Mammary epithelial cell (primary cell): ENCODE measurements at regions of chr6 and their contacts with region 1.

Region 1: DNA sequence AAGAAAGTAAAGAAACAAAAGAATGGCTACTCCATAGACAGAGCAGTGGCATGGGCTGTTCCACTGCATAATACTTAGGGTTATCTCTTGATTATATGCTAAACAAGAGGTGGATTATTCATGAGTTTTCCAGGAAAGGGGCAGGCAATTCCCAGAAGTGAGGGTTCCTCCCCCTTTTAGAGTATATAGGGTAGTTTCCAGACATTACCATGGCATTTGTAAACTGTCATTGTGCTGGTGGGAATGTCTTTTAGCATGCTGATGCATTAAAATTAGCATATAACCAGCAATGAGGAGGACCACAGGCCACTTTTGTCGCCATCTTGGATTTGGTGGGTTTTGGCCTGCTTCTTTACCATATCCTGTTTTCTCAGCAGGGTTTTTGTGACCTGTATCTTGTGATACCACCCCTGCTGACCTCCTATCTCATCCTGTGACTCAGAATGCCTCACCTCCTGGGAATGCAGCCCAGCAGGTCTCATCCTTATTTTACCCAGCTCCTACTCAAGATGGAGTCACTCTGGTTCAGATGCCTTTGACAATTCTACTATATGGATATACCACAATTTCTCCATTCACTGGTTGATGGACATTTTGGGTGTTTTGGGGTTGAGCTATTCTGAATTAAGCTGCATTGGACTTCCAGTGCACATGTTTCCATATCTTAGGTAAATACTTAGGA is 280.6 kb downstream of the FARS2 start:
- DNase-seq: peak; percentile 80
- H3K4me3 ChIP-seq: no peak overlapping the region
- H3K27ac ChIP-seq: peak overlapping the region; percentile 43
- H3K4me1 ChIP-seq: peaks cover 12% of the 10 kb centered on the region
- H3K27me3 ChIP-seq: no peaks in the 10 kb centered on the region
- CTCF ChIP-seq: no peak

Region 2: DNA sequence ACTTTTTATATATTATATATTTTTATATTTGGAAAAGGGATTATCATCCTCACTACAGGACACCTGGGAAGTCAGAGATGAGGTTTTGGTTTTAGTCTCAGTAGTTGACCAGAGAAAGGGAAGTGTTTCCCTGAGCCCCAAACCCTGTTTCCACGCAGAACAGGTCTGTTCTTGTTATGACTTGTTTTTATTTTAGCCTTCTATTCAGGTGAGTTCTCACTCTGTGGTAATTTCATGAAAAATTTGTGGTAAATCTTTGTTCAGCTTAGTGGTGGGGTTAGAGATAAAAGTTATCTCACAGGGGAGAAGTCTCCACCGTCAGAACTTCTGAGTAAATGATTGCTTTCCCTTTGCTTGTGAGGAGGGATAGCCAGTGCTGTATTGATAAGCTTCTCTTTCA is 55.7 kb before region 1 on chr6:
- CTCF ChIA-PET with region 1: no interaction called
- dilution Hi-C with region 1: no loop called
- in situ Hi-C with region 1: no loop called
- intact Hi-C with region 1: loop called (anchors 2 kb)
- DNase-seq: peak; percentile 33
- H3K4me3 ChIP-seq: no peak overlapping the region
- H3K27ac ChIP-seq: no peak overlapping the region
- H3K4me1 ChIP-seq: no peaks in the 10 kb centered on the region
- H3K27me3 ChIP-seq: no peaks in the 10 kb centered on the region
- CTCF ChIP-seq: no peak